AG04450 (cell line): ENCODE measurements at regions of chr1 and their contacts with region 1.

Region 1: GRCh38 chr1:43763497-43763973 is 56.2 kb downstream of the ST3GAL3 start:
- DNase-seq: peak; percentile 86
- H3K4me3 ChIP-seq: no peak overlapping the region
- H3K27ac ChIP-seq: no peak overlapping the region
- H3K27me3 ChIP-seq: no peaks in the 10 kb centered on the region
- CTCF ChIP-seq: peak; percentile 93

Region 2: DNA sequence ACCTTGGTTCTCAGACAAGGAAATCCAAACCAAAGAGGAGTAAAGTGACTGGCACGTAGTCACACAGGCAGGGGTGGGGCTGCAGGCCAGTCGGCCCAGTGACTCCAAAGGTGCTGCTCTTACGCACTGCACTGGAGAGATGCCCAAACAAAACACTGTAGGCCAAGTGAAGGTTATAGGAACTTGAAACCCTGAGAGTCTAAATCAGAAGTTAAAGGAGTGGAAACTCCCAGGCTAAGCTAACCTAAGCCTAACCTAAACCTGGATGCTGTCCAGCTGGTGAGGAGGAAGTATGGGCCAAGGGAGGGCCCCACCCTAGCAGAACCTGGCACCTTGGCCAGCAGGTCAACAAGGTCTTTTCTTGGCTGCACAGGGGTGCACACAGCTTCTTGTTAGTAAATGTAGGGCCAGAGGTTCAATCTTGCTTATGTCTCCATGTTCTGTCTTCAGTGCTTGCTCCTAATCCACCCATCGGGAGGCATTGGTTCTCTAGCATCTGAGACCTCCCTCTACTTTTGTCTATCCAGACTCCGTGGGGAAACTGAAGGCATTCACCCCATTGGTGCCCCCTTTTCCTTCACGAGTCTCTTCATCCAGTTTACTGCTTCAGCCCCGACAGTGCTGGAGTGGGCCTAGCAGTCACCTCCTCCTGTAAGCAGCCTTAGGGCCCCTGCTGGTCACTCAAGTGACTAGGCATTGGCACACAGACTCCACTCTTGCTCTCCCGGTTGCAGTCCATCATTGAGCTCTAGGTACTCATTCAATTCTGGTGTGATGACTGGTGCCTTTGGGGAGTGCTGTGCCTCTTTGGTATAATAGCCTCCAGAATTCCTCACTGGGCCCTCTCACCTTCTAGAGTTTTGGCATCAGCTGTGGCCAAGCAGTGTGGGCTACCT is 506.6 kb before region 1 on chr1:
- CTCF ChIA-PET with region 1: interaction called, 10 read pairs
- POLR2A ChIA-PET with region 1: no interaction called
- DNase-seq: no peak
- H3K4me3 ChIP-seq: no peak overlapping the region
- H3K27ac ChIP-seq: no peak overlapping the region
- H3K27me3 ChIP-seq: peaks cover 10% of the 10 kb centered on the region
- CTCF ChIP-seq: no peak

Region 3: GRCh38 chr1:43389326-43390313 is 373.9 kb before region 1 on chr1 and contains the starts of genes MED8 and SZT2:
- CTCF ChIA-PET with region 1: no interaction called
- POLR2A ChIA-PET with region 1: no interaction called
- DNase-seq: peak; percentile 79
- H3K4me3 ChIP-seq: peak within 1 kb of the TSS; percentile 100
- H3K27ac ChIP-seq: peak within 1 kb of the TSS; percentile 81
- H3K27me3 ChIP-seq: no peaks in the 10 kb centered on the region
- CTCF ChIP-seq: no peak
- polyA plus RNA-seq, gene MED8: 59.3 and 63.7 TPM in 2 replicates
- polyA plus RNA-seq, gene SZT2: 9.4 and 10.4 TPM in 2 replicates

Region 4: DNA sequence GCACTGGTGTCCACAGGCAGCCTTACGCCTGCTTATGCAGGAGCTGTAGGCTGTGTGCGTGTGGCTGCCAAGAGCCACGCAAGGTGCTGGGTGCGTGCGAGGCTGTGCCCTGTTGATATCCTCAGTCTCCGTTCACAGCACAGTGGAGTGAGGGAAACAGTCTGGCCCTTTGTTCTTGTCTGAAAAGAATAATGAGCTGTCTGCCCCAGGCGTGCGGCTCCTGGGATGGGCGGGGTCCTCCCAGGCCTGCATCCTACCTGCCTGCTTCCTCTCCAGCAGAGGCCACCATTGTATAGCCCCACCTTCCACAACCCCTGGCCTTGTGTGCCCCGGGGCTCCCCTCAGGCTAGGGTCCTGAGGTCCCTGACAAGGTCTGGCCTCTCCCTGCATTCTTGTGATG is 160.5 kb before region 1 on chr1:
- CTCF ChIA-PET with region 1: no interaction called
- POLR2A ChIA-PET with region 1: no interaction called
- DNase-seq: no peak
- H3K4me3 ChIP-seq: no peak overlapping the region
- H3K27ac ChIP-seq: no peak overlapping the region
- H3K27me3 ChIP-seq: no peaks in the 10 kb centered on the region
- CTCF ChIP-seq: no peak

Region 5: GRCh38 chr1:43774359-43774758 is 10.8 kb after region 1 on chr1:
- CTCF ChIA-PET with region 1: interaction called, 32 read pairs
- POLR2A ChIA-PET with region 1: no interaction called
- DNase-seq: peak; percentile 36
- H3K4me3 ChIP-seq: no peak overlapping the region
- H3K27ac ChIP-seq: peak overlapping the region; percentile 62
- H3K27me3 ChIP-seq: no peaks in the 10 kb centered on the region
- CTCF ChIP-seq: no peak

Region 6: DNA sequence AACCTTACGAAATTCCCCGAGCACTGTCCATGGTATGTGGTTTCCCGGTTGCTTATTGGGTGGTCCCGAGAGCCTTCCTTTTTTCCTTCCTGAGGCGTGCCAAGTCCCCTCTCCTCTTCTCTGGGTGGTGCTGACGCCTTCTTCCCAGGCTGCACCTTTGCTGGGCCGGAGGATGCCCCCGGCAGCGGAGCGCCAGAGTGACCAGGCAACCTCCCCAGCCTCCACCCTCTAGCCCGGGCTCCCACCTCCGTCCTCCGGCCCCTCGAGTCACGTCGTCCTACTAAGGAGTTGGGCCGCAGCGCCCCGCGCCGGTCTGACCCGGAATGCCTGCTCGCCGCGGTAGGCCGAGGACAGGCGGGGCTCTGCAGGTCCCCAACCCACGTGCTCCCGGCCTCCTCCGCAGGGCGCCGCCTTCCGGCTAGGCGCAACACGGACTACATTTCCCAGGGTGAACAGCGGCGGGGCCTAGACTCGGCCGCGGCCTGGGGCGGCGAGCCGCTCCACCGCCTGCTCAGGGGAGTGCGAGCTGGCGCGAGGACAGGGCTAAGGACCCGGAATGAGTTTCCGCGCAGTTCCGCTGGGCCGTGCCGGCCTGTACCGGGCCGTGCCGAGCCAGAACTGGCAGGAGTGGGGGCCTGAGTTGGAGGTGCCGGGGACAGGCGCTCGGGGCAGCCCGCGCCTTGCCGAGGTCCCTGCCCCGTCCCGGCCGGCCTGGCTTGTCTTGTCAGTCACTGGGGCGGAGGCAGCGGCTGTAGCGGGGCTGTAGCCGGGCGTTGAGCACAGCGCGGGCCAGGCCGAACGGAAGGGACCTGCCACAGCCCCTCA is 182.9 kb after region 1 on chr1 and contains the start of gene IPO13:
- CTCF ChIA-PET with region 1: interaction called, 27 read pairs
- POLR2A ChIA-PET with region 1: no interaction called
- DNase-seq: peak; percentile 84
- H3K4me3 ChIP-seq: peak within 1 kb of the TSS; percentile 91
- H3K27ac ChIP-seq: peak within 1 kb of the TSS; percentile 82
- H3K27me3 ChIP-seq: no peaks in the 10 kb centered on the region
- CTCF ChIP-seq: peak; percentile 46
- polyA plus RNA-seq, gene IPO13: 11.2 and 16.1 TPM in 2 replicates

Region 7: DNA sequence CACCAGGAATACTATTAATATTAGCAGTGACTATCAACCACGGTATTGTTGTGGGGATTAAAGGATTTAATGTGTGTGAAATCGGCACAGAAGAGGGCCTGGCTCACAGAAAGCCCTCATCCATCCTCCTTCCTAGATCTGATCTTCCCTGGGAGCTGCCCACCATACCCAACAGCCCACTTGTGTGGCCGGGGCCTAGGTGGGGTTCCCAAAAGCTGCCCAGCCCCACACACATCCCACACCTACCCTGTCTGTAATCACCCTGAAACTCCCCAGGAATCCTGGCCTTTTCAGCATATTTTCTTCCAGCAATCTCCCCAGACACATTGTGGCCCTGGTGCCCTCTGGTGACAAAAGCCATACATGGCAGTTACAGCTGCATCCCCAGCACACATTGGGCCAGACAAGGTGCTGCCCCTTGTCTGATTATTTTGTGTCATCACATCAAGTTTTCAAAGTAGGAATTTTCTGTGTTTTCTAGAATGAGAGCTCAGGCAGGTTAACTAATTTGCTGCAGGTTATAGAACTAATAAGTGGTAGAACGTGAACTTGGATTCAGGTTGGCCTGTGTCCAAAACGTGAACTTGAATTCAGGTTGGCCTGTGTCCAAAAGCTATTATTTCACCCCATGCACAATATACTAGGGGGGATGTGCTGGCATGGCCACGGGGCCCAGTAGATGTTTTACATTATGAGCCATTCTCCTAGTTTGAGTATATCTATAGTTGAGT is 273.0 kb after region 1 on chr1:
- CTCF ChIA-PET with region 1: interaction called, 16 read pairs
- POLR2A ChIA-PET with region 1: no interaction called
- DNase-seq: no peak
- H3K4me3 ChIP-seq: no peak overlapping the region
- H3K27ac ChIP-seq: peak overlapping the region; percentile 11
- H3K27me3 ChIP-seq: no peaks in the 10 kb centered on the region
- CTCF ChIP-seq: peak; percentile 63